HEK293 (cell line): ENCODE measurements at regions of chr1 and their contacts with region 1.

Region 1: DNA sequence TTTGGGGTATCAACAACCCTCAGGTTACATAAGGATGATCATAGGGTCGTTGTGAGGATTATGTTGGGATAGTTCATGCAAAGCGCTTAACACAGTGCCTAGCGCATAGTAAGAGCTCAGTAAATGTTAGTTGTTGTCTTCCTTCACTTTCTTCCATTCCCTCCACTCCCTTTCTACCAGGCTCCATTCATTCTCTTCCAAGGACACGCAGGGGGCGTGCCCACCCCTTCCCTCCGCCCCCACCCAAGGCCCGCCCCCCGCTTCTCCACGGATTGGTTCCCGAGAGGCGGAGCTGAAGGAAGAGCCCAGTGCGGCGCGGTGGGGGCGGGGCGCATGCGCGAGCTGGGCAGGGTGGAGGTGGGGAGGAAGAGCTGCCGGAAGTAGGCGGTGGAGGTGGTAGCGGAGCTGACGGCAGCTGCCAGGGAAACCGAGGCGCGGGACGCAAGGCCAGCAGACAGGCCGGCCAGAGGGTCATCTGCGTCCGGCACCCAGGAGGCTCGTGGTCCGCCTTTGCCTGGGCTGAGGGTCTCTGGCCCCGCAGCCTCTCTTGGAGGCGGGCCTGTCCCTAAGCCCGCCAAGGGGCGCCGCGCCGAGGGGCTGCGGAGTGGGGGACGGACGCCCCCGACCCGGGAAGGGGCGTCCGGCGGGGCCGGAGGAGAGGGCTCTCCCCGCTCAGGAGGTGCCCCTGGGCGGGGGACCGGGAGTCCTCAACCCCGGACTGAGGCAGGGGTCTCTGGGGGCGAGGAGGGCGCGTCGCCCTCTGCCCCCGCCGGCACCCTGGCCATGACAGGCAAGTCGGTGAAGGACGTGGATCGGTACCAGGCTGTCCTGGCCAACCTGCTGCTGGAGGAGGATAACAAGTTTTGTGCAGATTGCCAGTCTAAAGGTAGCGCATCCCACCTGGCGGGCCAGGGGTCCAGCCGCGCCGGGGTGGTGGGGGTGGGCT is at the start of gene SMAP2:
- H3K4me3 ChIP-seq: peak within 1 kb of the TSS; percentile 85
- H3K27ac ChIP-seq: peak within 1 kb of the TSS; percentile 11; the same call in 1 of the 2 replicates
- H3K4me1 ChIP-seq: no peaks in the 10 kb centered on the region
- CTCF ChIP-seq: peak; percentile 8; the same call in 1 of the 2 replicates

Region 2: GRCh38 chr1:40305457-40305856 is 68.2 kb before region 1 on chr1:
- CTCF ChIA-PET with region 1: no interaction called
- POLR2A ChIA-PET with region 1: no interaction called
- H3K4me3 ChIP-seq: no peak overlapping the region
- H3K27ac ChIP-seq: no peak overlapping the region
- H3K4me1 ChIP-seq: no peaks in the 10 kb centered on the region
- CTCF ChIP-seq: 0 out of 2 replicates have a peak, but pooled peaks have one; percentile 8

Region 3: GRCh38 chr1:40385437-40386358 is 12.1 kb after region 1 on chr1:
- CTCF ChIA-PET with region 1: no interaction called
- POLR2A ChIA-PET with region 1: interaction called, 22 read pairs
- H3K4me3 ChIP-seq: no peak overlapping the region
- H3K27ac ChIP-seq: no peak overlapping the region
- H3K4me1 ChIP-seq: peaks cover 14% of the 10 kb centered on the region; the same call in 1 of the 2 replicates
- CTCF ChIP-seq: no peak